ENCODE measurements at regions of chr16 and their contacts with region 1.

Region 1: DNA sequence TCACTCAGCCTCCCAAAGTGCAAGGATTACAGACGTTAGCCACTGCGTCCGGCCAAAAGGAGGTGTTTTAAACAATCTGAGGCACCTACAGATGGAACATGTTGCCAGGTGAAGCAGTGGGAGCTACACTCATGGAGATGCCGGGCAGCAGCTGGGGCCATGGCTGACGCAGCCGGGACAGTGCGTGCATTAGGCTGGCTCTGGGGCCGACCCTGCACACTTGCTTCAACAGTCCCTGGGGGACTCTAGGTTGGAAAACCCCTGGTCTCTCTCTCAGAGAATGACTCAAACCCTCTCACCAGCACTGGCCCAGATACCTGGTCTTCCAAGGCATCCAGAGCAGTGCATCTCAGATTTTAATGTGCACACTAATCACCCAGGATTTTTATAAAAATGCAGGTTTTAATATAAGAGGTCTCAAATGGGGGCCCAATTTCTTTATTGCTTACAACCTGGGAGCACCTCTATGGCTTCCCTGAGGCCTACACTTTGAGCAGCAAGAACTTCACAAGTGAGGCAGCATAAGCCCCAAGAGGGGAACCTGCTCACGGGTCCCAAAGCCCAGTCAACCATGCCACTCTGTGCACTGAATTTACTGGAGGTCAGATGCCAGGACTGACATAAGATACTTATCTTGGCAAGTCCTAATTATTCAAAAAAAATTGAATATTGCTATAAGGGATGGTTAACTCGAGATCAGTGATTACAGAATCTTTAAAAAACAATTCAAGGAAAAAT is 70.8 kb upstream of the TRAP1 start:
- DNase-seq: peak; percentile 55
- ATAC-seq: peak; percentile 93
- H3K4me3 ChIP-seq: no peak overlapping the region
- H3K27ac ChIP-seq: peak overlapping the region; percentile 47
- H3K4me1 ChIP-seq: peaks cover 29% of the 10 kb centered on the region
- H3K27me3 ChIP-seq: no peaks in the 10 kb centered on the region
- CTCF ChIP-seq: no peak
- EP300 ChIP-seq: peak; percentile 82 to 86
- POLR2A ChIP-seq: no peak
- RAD21 ChIP-seq: no peak

Region 2: DNA sequence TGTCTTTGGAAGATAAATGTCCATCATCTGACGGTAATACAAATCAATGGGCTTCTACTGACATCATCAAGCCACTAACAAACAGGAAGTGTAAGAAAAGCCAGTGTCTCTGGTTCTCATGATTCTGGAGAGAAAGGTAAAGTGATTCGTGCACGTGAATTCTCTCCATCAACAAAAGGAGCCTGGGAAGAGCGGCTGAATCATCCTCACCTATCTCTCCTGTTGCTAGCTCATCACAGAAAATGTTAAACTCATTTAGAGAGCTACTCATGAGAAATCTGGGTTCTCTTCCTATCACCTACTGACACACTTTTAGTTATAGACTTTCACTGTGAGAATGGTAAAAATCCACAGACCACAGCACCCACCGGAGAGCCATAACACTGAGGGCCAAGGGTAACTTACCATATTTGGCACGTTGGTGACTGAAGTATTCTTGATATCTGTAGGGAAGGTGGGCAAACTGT is 22.1 kb after region 1 on chr16:
- CTCF ChIA-PET with region 1: no interaction called
- POLR2A ChIA-PET with region 1: interaction called, 3 read pairs
- RAD21 ChIA-PET with region 1: no interaction called
- SMC1A ChIA-PET with region 1: no interaction called
- in situ Hi-C with region 1: no loop called
- intact Hi-C with region 1: loop called (anchors 1 kb)
- DNase-seq: peak; percentile 63
- ATAC-seq: peak; percentile 82
- H3K4me3 ChIP-seq: no peak overlapping the region
- H3K27ac ChIP-seq: peak overlapping the region; percentile 71
- H3K4me1 ChIP-seq: peaks cover 33% of the 10 kb centered on the region
- H3K27me3 ChIP-seq: no peaks in the 10 kb centered on the region
- CTCF ChIP-seq: no peak
- EP300 ChIP-seq: no peak
- POLR2A ChIP-seq: no peak
- RAD21 ChIP-seq: no peak

Measured in GM12878 (cell line).